ENCODE measurements at regions of chr2 and their contacts with region 1.

Region 1: DNA sequence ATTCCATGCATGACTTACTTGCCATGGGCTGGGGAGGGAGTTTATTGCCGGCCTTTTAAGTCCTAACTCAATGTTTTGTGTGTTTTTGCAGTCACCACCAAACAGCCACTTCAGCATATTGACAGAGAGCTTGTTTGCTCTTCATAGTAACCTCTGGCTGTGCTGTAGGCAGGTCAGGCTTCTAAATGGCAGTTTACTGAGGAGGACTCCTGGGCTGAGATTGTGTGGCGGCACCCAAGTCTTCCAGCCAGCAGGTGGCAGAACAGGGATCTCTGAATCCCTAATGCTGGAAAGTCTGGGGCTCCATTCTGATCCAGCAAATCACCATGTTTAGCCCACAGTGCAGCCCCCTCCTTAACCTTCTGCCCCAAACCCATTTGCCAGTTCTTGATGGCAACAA is 121.2 kb downstream of the CAPN13 start:
- DNase-seq: no peak
- H3K4me3 ChIP-seq: no peak overlapping the region
- H3K27ac ChIP-seq: no peak overlapping the region
- H3K4me1 ChIP-seq: peaks cover 13 to 31% of the 10 kb centered on the region in 2 donors
- H3K27me3 ChIP-seq: no peaks in the 10 kb centered on the region
- CTCF ChIP-seq: peak in 1 of 3 experiments; percentile 5

Region 2: GRCh38 chr2:29723255-29724001 is 962.6 kb before region 1 on chr2:
- intact Hi-C with region 1: no loop called
- DNase-seq: no peak
- H3K4me3 ChIP-seq: no peak overlapping the region
- H3K27ac ChIP-seq: no peak overlapping the region
- H3K4me1 ChIP-seq: no peaks in the 10 kb centered on the region
- H3K27me3 ChIP-seq: no peaks in the 10 kb centered on the region
- CTCF ChIP-seq: no peak

Region 3: GRCh38 chr2:30629866-30630265 is 56.1 kb before region 1 on chr2:
- intact Hi-C with region 1: loop called (anchors 5 kb)
- DNase-seq: no peak
- H3K4me3 ChIP-seq: no peak overlapping the region
- H3K27ac ChIP-seq: no peak overlapping the region
- H3K4me1 ChIP-seq: no peaks in the 10 kb centered on the region
- H3K27me3 ChIP-seq: no peaks in the 10 kb centered on the region
- CTCF ChIP-seq: no peak